GM23248 (cell line): ENCODE measurements at regions of chr3 and their contacts with region 1.

Region 1: GRCh38 chr3:170180908-170181879 is at the start of gene PHC3:
- DNase-seq: peak; percentile 96
- H3K4me3 ChIP-seq: peak within 1 kb of the TSS; percentile 93
- H3K27ac ChIP-seq: peak within 1 kb of the TSS; percentile 90
- H3K4me1 ChIP-seq: peaks cover 15% of the 10 kb centered on the region
- H3K27me3 ChIP-seq: no peaks in the 10 kb centered on the region
- total RNA-seq, gene PHC3: 17.5 and 21.9 TPM in 2 replicates

Region 2: DNA sequence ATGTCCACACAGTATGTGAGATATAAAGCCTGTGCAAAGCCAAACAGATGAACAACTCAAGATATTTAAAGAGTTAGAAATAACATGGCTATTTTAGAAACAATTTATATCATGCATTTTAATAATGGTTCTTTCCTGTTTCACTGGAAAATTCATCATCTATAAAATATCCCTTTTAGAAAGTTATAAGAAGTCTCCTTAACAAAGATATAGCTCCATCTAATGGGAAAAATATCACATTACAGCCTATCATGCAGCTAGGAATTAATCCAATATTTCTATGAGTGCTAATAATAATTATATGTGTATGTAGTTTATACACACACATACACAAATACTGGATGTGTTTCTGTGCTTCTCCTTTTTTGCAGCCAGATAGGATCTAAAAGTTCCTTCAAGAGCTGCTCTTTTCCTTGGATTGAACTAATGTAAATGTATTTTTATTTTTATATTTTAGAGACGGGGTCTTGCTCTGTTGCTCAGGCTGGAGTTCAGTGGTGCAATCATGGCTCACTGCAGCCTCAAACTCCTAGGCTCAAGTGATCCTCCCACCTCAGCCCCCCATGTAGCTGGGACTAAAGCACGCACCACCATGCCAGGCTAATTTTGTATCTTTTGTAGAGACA is 667.2 kb after region 1 on chr3:
- in situ Hi-C with region 1: loop called (anchors 25 kb)
- DNase-seq: peak; percentile 55
- H3K4me3 ChIP-seq: no peak overlapping the region
- H3K27ac ChIP-seq: no peak overlapping the region
- H3K4me1 ChIP-seq: 0 out of 2 replicates have a peak, but pooled peaks cover 3% of the 10 kb centered on the region
- H3K27me3 ChIP-seq: no peaks in the 10 kb centered on the region

Region 3: DNA sequence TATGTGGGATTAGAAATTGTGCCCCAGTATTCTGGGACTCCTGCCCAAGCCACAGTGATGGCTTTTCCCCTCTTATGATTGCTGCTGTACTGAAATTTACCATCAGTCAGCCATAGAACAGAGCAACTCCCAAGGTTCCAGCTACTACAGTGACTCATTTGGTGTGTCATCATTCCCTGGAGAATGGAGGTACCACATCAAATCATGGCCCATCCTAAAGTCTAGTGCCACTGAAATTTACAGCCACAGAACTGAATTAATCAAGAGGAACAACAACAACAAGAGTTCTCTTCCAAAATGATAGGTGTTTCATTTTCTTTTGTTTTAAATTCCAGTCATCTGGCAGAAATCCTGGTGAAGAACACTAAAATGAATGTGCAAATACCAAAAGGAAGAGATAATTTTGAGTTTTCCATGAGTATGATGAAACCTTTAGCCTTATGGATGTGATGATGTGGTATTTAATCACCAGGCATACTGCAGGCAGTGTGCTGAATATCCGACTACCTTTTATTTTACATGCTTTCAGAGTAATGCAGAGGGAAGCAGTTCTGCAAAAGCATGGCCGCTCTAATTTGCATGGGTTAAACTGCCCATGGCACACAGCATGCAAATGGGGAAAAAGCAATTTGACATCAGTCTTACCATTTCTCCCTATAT is 920.9 kb after region 1 on chr3:
- in situ Hi-C with region 1: no loop called
- DNase-seq: peak; percentile 88
- H3K4me3 ChIP-seq: peak overlapping the region; percentile 35
- H3K27ac ChIP-seq: peak overlapping the region; percentile 74
- H3K4me1 ChIP-seq: peaks cover 18% of the 10 kb centered on the region
- H3K27me3 ChIP-seq: no peaks in the 10 kb centered on the region